ENCODE measurements at regions of chr16 and their contacts with region 1.

Region 1: GRCh38 chr16:22333457-22333994 is 36.3 kb downstream of the POLR3E start:
- DNase-seq: no peak
- CTCF ChIP-seq: no peak

Region 2: GRCh38 chr16:22174642-22175041 is 158.9 kb before region 1 on chr16:
- in situ Hi-C with region 1: no loop called
- DNase-seq: no peak
- CTCF ChIP-seq: no peak

Region 3: GRCh38 chr16:22217889-22218730 is 115.4 kb before region 1 on chr16:
- in situ Hi-C with region 1: no loop called
- DNase-seq: peak; percentile 89
- CTCF ChIP-seq: no peak

Region 4: DNA sequence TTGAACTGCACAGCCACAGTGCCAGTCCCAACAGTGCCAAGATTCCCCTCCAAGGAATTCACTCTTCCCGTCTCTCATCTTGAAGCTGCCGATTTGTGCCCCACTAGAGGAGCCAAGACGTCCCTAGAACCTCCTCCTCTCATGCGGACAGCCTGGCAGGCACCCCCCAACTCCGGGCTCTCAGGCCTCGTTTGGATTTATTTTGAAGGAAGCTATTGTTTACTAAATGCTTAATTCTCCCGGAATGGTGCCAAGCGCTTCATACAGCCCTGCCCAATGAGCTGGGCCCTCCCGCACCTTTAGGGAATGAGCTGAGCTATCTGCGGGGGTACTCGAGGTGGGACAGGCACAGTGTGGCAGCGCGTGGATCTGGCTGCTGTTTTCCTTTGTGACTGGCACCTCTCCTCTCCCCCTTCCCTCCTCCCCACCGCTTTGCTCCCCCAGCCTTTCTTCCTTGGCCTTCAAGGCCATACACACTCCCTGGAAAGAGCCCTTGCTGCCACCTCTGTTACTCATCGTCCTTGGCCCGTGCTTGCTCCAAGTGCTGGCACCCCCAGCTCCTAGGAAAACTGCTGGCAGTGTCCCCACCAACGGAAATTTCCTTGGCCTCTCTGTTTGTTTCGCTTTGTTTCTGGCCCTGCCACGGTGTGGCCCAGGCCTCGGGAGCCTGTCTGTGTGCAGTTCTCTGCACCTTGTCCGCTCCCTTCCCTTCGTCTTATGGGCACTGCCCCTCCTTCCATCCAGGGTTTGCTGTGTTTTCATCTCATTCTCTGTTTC is 90.8 kb after region 1 on chr16:
- in situ Hi-C with region 1: loop called (anchors 10 kb)
- DNase-seq: no peak
- CTCF ChIP-seq: no peak